Sigmoid colon (tissue), 7 donors: ENCODE measurements at regions of chr3 and their contacts with region 1.

Region 1: DNA sequence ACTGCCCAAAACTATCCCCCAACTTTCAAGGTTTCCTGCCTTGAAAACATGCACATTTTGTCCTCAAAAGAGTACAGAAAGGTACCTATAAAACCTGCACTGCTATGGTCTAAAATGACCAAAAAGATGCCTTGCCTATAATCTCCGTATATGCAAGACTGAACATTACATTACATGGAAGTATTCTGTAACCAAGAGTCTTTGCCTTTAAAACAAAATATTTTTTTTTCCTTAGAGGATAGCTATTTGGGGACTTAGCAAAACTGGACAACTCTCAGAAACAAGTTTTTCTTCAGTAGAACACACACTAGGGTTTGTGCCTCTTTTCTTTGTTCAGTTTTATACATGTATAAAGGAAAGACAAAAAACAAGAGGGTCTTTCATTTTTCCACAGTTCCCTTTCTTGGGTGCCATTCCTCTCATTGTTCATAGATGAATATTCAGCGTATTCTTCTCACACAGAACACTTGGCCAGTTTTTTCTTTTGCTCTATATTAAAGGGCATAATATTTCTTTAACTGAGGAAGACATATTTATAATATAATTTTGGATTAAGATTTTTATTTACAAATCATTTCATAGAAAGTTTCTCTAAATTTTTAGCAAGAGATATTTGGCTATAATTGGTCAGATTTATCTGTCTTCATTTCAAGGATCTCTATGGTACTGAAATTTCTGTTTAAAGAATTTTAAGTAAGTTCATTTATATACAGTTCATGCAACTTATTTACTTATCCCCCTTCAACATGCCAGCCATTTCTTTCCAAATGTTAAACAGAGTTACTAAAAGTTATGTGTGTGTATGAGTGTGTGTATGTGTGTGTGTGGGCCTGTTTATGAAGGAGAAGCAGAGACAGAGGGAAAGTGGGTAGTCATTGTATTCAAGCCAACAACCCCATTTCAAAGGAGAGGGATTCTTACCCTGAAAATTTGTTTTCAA is 142.6 kb downstream of the ZBTB20 start:
- DNase-seq: no peak
- H3K4me3 ChIP-seq: no peak overlapping the region
- H3K27ac ChIP-seq: no peak overlapping the region
- H3K4me1 ChIP-seq: no peaks in the 10 kb centered on the region
- H3K27me3 ChIP-seq: no peaks in the 10 kb centered on the region
- CTCF ChIP-seq: no peak
- EP300 ChIP-seq: no peak
- POLR2A ChIP-seq: no peak

Region 2: DNA sequence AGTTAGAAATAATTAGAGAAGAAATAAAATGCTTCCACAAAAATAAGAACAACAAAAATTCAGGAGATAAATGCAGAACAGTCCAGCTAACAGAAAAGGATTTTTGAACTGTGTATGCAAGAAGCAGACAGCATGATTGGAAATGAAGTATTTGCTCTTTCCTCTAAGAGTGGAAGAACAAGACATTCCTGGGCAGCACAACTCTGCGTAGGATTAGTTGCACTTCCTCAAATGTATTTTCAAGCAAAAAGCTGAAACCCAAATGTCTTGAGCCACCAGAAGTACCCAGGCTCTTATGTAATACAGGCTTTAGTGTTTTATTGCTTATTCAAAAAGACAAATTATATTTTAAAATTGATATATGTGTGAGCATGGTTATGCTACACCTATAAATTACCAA is 15.4 kb after region 1 on chr3:
- intact Hi-C with region 1: loop called (anchors 1 kb)
- DNase-seq: peak; percentile 60
- H3K4me3 ChIP-seq: no peak overlapping the region
- H3K27ac ChIP-seq: peak overlapping the region; percentile 29 to 66 (median 49)
- H3K4me1 ChIP-seq: peaks cover 0 to 44% (median 22%) of the 10 kb centered on the region in 4 donors
- H3K27me3 ChIP-seq: no peaks in the 10 kb centered on the region
- CTCF ChIP-seq: no peak
- EP300 ChIP-seq: peak in 1 of 4 donors; percentile 20
- POLR2A ChIP-seq: no peak